HEK293 (cell line): ENCODE measurements at regions of chr7 and their contacts with region 1.

Region 1: DNA sequence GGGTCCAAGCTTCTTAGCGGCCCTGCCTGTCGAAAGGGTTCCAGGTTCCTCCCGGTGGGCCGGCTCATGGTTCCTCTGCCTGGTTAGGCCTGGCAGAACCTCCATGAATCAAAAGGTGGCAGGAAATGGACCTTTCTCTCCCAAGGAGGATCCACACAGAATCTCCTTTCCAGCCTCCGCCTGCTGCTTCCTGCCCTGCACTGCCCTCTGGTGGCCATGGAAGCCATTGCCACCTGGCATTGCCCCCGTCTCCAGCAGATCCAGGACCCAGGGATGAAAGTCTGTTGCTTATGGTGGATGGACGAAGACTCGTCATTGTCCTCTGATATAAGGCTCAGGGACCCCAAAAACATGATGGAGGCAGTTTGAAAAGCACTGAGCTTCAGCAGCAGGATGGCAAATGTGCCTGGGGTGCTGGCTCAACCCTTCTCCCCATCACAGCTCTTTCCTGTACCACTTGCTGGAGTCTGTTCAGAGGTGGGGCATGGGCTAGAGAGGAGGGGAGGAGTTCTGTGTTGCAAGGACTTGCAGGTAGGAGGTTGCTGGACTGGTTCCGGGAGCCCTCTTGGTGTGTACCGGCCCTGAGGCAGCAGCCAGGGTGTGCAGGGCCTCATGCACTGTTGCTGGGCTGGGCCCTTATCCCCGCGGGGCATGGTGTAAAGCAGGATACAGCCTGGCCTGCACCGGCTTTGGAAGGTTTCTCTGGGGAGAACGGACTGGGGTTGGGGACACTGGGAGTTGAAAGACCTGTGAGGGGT is 11.3 kb upstream of the INMT start:
- H3K4me3 ChIP-seq: no peak overlapping the region
- H3K27ac ChIP-seq: no peak overlapping the region
- H3K4me1 ChIP-seq: no peaks in the 10 kb centered on the region
- CTCF ChIP-seq: peak; percentile 68

Region 2: GRCh38 chr7:30548762-30549344 is 191.8 kb before region 1 on chr7:
- CTCF ChIA-PET with region 1: interaction called, 21 read pairs
- POLR2A ChIA-PET with region 1: no interaction called
- H3K4me3 ChIP-seq: no peak overlapping the region
- H3K27ac ChIP-seq: no peak overlapping the region
- H3K4me1 ChIP-seq: peaks cover 8% of the 10 kb centered on the region; the same call in 1 of the 2 replicates
- CTCF ChIP-seq: peak; percentile 31; the same call in 1 of the 2 replicates

Region 3: DNA sequence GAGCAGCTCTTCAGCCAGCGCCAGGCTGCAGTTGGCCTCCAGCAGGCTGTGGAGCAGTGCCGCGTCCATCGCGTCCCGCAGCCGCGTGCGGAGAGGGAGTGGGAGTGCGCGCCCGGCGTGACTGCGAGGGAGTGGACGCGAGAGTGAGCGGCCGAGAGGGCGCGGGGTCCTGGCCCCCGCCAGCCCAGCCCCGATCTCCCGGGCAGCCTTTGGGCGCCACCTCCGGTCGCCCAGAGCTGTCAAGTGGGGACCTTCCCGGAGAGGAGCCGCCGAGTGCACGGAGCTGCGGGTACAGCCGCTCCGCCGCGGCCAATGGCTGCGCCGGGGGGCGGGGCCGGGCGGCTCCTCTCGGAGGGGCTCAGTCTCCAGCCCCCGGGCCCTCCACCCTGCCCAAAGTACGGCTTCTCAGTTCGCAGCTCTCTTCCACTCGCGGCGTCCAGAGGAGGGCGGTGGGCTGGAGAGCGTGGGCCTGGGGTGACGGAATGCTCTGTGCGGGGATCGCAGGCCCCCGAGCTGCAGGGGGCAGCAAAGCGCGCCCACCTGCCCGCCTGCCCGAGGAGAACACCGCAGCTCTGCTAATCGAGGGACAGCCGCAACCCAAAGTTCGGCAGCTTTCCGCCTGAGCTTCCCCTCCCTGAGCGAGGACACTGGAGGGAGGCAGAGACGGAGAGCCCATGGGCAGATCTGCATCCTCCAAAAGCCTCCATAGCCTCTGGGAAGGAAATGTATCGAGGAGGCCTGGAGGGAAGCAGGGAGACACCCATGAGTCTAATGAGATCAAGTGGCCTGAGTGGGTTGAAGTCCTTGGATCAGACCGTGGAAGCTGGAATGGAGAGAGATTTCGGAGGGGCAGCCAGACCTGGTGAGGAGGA is 58.2 kb before region 1 on chr7 and contains the start of gene CRHR2:
- CTCF ChIA-PET with region 1: interaction called, 18 read pairs
- POLR2A ChIA-PET with region 1: no interaction called
- H3K4me3 ChIP-seq: peak within 1 kb of the TSS; percentile 35
- H3K27ac ChIP-seq: no peak within 1 kb of the TSS
- H3K4me1 ChIP-seq: no peaks in the 10 kb centered on the region
- CTCF ChIP-seq: peak; percentile 85

Region 4: DNA sequence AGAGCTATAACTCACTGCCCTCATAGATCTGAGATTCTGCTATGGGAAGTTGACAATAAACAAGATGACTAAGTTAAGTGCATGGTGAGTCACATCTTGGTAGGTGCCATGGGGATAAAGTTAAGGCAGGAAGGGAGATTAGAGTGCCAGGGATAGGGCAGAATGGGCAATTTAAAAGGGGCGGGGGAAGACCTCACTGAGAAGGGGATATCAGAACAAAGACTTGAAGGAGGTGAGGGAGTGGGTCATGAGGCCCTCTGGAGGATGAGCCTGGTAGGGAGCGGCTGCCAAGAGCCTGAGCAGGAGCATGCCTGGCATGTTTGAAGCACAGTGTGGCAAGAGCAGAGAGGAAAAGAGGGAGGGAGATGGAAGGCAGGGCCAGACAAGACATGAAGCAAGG is 23.4 kb before region 1 on chr7:
- CTCF ChIA-PET with region 1: interaction called, 12 read pairs
- POLR2A ChIA-PET with region 1: no interaction called
- H3K4me3 ChIP-seq: no peak overlapping the region
- H3K27ac ChIP-seq: no peak overlapping the region
- H3K4me1 ChIP-seq: no peaks in the 10 kb centered on the region
- CTCF ChIP-seq: no peak

Region 5: GRCh38 chr7:30727061-30727945 is 13.3 kb before region 1 on chr7:
- CTCF ChIA-PET with region 1: interaction called, 13 read pairs
- POLR2A ChIA-PET with region 1: no interaction called
- H3K4me3 ChIP-seq: no peak overlapping the region
- H3K27ac ChIP-seq: no peak overlapping the region
- H3K4me1 ChIP-seq: no peaks in the 10 kb centered on the region
- CTCF ChIP-seq: no peak